ENCODE measurements at regions of chr10 and their contacts with region 1.

Region 1: DNA sequence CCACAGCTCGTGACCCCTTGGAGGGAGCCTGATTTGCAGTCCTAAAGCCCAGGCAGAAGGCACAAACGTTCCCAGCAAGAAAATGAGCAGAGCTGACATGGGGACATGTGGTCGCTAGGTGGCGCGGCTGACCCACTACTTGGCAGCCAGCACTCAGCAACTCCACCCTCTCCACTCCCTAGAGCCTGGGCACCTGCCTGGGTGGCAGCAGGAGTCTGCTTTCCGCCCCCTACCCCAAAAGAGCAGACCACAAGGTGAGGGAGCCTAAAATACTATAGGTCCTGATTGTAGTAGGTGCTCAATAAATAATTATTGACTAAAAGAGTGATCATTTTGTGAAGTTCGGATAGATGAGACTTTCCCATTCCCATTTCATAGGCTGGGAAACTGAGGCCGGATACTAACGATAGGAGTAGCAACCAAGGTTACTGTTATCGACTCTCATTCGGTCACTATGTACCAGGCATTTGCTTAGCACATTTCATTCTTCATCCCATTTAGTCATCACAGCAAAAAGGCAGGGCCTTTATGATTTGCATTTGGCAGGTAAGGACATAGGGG is 57.4 kb downstream of the NEUROG3 start:
- DNase-seq: peak; percentile 82 to 88
- H3K4me3 ChIP-seq: no peak overlapping the region
- H3K4me3 Mint-ChIP-seq: no peak overlapping the region
- H3K27ac Mint-ChIP-seq: no peak overlapping the region
- H3K4me1 ChIP-seq: no peaks in the 10 kb centered on the region
- H3K4me1 Mint-ChIP-seq: no peaks in the 10 kb centered on the region
- H3K27me3 ChIP-seq: no peaks in the 10 kb centered on the region
- H3K27me3 Mint-ChIP-seq: no peaks in the 10 kb centered on the region
- CTCF ChIP-seq: peak; percentile 97 to 99

Region 2: GRCh38 chr10:69639291-69640195 is 123.8 kb after region 1 on chr10:
- CTCF ChIA-PET with region 1: interaction called, 105 read pairs
- POLR2A ChIA-PET with region 1: interaction called, 3 read pairs
- intact Hi-C with region 1: loop called (anchors 1 kb)
- DNase-seq: peak; percentile 83 to 85
- H3K4me3 ChIP-seq: no peak overlapping the region
- H3K4me3 Mint-ChIP-seq: no peak overlapping the region
- H3K27ac Mint-ChIP-seq: no peak overlapping the region
- H3K4me1 ChIP-seq: no peaks in the 10 kb centered on the region
- H3K4me1 Mint-ChIP-seq: no peaks in the 10 kb centered on the region
- H3K27me3 ChIP-seq: 0 out of 2 replicates have a peak, but pooled peaks cover 1% of the 10 kb centered on the region
- H3K27me3 Mint-ChIP-seq: peaks cover 7% of the 10 kb centered on the region
- CTCF ChIP-seq: peak; percentile 97 to 99

Region 3: GRCh38 chr10:69644658-69645295 is 129.0 kb after region 1 on chr10:
- CTCF ChIA-PET with region 1: interaction called, 10 read pairs
- POLR2A ChIA-PET with region 1: interaction called, 3 read pairs
- intact Hi-C with region 1: loop called (anchors 1 kb)
- DNase-seq: peak; percentile 74 to 81
- H3K4me3 ChIP-seq: no peak overlapping the region
- H3K4me3 Mint-ChIP-seq: no peak overlapping the region
- H3K27ac Mint-ChIP-seq: no peak overlapping the region
- H3K4me1 ChIP-seq: no peaks in the 10 kb centered on the region
- H3K4me1 Mint-ChIP-seq: no peaks in the 10 kb centered on the region
- H3K27me3 ChIP-seq: 0 out of 2 replicates have a peak, but pooled peaks cover 1% of the 10 kb centered on the region
- H3K27me3 Mint-ChIP-seq: peaks cover 19% of the 10 kb centered on the region
- CTCF ChIP-seq: peak; percentile 96

Region 4: GRCh38 chr10:69716711-69717560 is 201.2 kb after region 1 on chr10:
- CTCF ChIA-PET with region 1: interaction called, 5 read pairs
- POLR2A ChIA-PET with region 1: no interaction called
- intact Hi-C with region 1: loop called (anchors 2 kb)
- DNase-seq: peak; percentile 73 to 86
- H3K4me3 ChIP-seq: no peak overlapping the region
- H3K4me3 Mint-ChIP-seq: no peak overlapping the region
- H3K27ac Mint-ChIP-seq: no peak overlapping the region
- H3K4me1 ChIP-seq: no peaks in the 10 kb centered on the region
- H3K4me1 Mint-ChIP-seq: no peaks in the 10 kb centered on the region
- H3K27me3 ChIP-seq: no peaks in the 10 kb centered on the region
- H3K27me3 Mint-ChIP-seq: peaks cover 24% of the 10 kb centered on the region
- CTCF ChIP-seq: peak; percentile 94 to 99

Measured in Caco-2 (cell line).